Posterior vena cava (tissue), 2 donors: ENCODE measurements at regions of chr7 and their contacts with region 1.

Region 1: GRCh38 chr7:2477447-2478398 is 1.5 kb upstream of the GRIFIN start:
- DNase-seq: peak; percentile 90

Region 2: DNA sequence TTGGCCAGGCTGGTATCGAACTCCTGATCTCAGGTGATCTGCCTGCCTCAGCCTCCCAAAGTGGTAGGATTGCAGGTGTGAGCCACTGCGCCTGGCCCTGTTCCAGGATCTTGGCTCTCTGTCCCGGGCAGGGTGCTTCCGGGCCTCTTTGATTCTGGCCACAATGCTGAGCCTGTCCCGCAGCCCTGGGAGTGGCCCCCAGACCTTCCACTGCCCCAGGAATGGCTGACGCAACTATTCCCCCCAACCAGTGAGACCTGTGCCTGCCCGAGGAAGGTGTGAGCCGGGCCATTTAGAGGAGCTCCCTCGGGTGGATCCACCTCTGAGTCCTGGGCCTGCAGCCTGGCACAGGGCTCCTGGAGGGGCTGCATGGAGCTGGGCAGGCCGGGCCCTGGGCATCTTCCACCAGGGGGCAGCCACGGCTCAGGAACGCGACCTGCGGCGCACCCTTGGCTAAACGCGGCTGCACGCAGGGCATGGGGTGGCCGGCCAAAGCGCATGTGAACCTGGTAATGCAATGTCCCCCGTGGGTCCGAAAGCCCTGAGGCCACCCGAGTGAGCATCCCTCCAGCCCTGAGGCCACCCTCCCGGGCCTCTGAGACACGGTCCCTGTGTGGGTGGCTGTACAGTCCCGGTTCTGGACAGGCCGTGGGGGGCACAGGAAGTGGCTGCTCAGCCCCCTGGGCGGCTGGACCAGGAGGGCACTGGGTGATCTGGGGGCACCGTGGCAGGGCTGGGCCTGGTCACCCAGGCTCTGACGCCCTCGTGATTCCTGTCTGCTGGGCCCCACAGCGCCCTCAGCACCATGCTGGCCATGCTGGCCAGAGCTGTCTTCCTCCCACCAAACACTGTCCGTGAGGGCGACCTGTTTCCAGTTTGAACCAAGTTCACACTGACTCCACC is 26.3 kb before region 1 on chr7:
- intact Hi-C with region 1: loop called in 1 of 2 experiments (anchors 1 kb)
- DNase-seq: peak; percentile 96

Region 3: DNA sequence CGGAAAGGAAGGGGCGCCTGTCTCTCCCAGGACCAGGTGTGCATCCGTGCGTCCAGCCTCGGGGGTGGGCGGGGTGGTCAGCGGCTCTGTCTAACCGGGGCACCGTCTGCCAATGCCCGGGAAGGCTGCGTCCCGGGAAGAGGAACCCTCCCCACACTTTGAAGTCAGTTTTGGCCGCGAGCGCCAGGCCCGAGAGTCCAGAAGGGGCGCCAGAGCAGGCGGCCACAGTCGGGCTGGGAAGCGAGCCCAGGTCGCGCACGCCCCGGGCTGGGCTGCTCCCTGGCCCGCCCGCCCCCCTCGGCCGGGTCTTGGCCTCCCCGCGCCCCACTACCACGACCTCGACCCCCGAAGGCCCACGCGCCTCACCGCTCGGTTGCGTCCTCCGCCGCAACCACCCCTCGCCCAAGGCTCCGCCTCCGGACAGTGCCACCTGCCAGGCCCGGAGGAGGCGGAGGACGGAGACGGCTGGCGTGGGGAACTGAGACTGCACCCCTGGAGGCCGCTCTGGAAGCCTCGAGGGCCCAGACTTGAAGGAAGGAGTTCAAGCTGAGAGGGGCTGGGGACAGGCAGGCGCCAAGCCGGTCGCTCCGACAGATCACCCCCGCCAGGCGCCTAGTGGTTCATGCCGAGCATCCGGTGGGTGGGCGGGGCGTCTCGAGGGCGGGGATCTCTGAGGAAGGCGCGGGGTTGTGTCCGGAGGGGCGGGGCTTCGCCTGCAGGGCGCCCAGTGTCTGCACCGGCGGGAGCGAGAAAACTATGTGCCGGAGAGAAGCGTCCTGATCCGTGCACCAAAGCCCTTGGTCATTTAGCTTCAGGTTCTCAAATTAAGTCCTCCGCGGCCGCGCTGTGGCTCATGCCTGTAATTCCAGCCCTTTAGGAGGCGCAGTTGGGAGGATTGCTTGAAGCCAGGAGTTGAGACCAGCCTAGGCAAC is 77.7 kb after region 1 on chr7 and contains the start of gene BRAT1:
- intact Hi-C with region 1: loop called in 1 of 2 experiments (anchors 10 kb)
- DNase-seq: peak; percentile 99
- total RNA-seq, gene BRAT1: 16.3 to 17.2 TPM

Region 4: DNA sequence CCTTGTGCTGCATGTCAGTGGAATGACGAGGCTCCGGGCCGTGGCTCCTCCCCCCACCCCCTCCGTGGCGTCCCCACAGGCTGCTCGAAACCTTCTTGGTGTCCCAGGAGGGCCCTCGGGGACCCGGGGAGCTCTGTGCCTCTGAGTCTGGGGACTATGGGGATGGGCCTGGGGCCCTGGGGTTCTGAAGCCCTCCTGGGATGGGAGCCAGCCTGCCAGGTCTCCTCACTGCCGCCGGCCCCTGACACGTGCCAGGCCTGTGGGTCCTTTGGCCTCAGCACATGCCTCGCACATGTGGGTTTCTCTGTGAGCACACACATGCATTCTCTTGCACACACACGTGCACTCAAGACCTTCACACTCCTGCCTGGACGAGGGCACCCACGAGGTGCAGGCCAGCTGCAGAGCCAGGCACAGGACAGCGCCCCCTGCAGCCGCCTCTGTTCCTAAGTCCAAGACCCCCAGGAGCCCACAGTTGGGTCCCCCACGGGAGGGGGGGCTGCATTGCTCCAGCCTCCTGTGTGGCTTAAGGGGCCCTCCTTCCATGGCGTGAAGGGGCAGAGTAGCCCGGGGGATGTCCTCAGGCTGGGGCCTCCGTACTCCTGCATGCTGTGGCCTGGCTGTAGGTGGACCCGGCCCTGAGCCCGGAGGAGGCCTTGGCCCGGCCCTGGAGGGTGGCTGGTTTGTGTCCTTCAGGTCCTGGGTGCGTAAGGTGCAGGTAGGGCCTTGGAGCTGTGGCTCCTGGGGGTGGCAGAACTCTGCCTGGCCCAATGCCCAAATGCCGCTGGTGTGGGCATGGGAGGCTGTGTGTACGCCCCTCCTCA is 183.1 kb after region 1 on chr7:
- intact Hi-C with region 1: loop called in 1 of 2 experiments (anchors 10 kb)
- DNase-seq: no peak

Region 5: DNA sequence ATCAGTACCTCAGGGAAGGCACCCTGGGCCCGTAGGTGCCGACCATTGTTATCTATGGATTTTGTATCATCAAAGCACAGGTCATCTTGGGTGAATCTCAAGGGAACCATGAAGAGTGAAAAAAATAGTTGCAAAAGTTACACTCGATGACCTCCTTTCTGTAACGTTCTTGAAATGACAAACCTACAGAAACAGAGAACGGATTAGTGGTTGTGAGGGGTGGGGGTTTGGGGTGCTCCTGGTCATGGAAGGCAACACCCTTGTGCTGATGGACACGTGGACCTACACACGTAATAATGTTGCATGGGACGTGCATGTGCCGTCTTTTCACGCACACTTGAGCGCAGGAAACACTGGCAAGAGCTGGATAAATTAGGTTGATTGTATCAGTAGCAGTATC is 1479.2 kb after region 1 on chr7:
- intact Hi-C with region 1: no loop called
- DNase-seq: no peak